AG04450 (cell line): ENCODE measurements at regions of chr12 and their contacts with region 1.

Region 1: DNA sequence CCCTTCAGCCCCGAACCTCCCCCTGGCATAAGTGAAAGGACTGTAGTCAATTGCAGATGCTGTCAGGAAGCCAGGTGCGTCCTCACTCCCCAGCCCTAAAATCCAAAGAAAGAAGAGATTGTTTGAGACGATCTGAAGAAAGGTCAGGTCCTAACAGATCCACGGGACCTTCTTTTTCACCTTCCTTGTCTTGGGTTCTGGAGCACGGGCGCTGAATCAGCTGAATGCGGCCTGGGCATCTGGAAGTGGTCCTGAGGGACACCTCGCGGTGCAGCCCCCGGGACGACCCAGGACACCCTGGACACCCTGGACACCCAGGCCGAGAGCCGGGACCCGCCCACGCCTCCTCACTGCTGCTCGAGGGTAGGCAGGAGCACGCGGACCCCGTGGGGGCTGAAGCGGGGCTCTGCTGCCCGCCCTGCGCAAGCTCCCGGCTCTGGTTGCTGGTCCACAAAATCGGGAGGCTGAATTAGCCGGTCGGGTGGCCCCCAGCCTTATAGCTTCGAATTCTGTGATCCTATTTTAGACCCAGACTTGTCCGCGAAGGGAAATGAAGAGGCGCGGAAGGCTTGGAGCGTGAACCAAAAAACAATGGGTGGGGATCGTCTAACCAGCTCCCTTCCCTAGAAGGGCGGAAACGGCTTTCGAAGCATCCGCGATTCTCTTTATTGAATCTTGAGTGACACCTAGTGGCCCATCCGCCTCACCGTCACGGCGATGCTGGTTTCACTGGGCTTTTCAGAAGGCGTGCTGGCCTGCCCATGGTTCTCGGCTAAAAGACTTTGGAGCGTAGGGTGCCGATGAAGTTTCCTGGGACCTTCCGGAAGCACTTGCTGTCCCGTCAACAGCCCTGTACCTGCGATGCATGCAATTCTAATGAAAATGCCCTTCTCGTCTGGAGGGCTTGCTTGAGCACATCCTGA is 46.4 kb upstream of the PLXNC1 start:
- DNase-seq: peak; percentile 73
- H3K4me3 ChIP-seq: peak overlapping the region; percentile 66
- H3K27ac ChIP-seq: peak overlapping the region; percentile 39
- H3K27me3 ChIP-seq: peaks cover 3% of the 10 kb centered on the region
- CTCF ChIP-seq: peak; percentile 80

Region 2: GRCh38 chr12:93502802-93503623 is 599.0 kb before region 1 on chr12:
- CTCF ChIA-PET with region 1: interaction called, 339 read pairs
- POLR2A ChIA-PET with region 1: interaction called, 8 read pairs
- DNase-seq: no peak
- H3K4me3 ChIP-seq: no peak overlapping the region
- H3K27ac ChIP-seq: no peak overlapping the region
- H3K27me3 ChIP-seq: no peaks in the 10 kb centered on the region
- CTCF ChIP-seq: peak; percentile 85

Region 3: DNA sequence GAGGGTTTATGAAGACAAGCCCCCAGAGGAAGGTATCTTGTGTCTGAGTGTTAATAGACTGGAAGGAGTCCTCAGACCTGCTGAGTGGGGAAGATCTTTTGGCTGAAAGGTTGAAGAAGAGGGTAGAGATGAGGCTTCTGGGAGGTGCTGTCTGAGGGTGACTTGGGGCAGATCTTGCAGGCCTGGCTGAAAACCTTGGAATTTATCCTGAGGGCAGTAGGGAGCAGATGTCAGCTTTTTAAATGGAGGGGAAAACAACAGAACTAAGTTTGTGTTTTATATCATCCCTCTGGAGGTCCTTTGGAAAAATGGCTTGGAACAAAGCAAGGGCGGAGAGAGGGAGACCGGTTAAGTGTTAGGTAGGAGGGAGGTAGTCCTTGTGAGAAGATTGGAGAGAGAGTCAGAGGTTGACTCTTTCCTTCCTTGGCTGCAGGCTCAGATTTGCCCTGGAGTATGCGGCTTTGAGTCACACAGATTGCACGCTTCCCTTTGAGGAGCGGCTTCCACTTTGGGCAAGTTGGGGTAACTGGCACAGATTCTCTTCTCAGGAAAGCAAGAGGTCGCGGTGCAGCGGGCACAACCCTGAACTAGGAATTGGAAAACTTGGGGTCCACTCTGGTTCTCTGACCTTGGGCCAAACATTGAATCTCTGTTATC is 519.8 kb before region 1 on chr12:
- CTCF ChIA-PET with region 1: interaction called, 10 read pairs
- POLR2A ChIA-PET with region 1: no interaction called
- DNase-seq: no peak
- H3K4me3 ChIP-seq: no peak overlapping the region
- H3K27ac ChIP-seq: no peak overlapping the region
- H3K27me3 ChIP-seq: no peaks in the 10 kb centered on the region
- CTCF ChIP-seq: no peak

Region 4: GRCh38 chr12:93766796-93767523 is 335.0 kb before region 1 on chr12:
- CTCF ChIA-PET with region 1: interaction called, 208 read pairs
- POLR2A ChIA-PET with region 1: no interaction called
- DNase-seq: no peak
- H3K4me3 ChIP-seq: no peak overlapping the region
- H3K27ac ChIP-seq: no peak overlapping the region
- H3K27me3 ChIP-seq: no peaks in the 10 kb centered on the region
- CTCF ChIP-seq: peak; percentile 72

Region 5: DNA sequence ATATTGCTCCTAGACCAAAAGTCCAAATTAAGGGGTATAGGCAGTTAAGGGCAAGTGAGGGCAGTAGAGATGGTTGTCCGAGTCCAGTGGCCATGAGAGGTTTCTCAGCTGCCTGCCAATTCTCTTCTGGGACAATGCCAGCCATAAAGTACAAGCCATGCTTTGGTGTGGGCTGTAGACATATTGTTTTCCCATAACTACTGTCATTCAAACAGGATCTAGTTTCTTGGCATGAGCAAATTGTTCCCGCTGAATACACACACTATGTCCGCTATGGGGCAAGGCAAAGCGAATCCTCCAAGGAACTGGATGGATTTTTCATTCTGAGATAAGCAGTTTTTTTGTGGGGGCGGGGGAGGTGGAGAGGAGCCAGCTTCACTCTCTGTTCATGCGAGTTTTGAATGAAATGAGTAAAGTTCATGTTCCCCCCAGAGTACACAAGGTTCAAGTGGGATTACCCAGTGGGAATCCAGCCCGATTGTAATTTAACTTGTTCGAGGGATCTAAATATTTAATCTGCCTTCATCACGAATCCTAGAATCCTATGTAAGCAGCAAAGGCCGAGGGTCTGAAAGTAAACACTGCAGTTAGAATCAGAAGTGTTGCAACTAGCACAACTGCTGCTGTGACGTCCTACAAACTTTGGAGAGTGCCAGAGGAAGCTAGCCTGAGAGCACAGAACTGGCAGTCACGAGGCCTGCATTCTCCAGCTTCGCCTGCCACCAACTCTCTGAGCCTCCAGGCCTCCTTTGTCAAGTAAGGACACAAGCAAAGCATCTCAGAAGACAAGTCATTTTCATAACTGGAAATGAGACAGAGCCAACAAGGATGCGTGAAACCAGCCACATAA is 287.8 kb before region 1 on chr12:
- CTCF ChIA-PET with region 1: interaction called, 11 read pairs
- POLR2A ChIA-PET with region 1: no interaction called
- DNase-seq: peak; percentile 61
- H3K4me3 ChIP-seq: no peak overlapping the region
- H3K27ac ChIP-seq: peak overlapping the region; percentile 83
- H3K27me3 ChIP-seq: no peaks in the 10 kb centered on the region
- CTCF ChIP-seq: no peak

Region 6: DNA sequence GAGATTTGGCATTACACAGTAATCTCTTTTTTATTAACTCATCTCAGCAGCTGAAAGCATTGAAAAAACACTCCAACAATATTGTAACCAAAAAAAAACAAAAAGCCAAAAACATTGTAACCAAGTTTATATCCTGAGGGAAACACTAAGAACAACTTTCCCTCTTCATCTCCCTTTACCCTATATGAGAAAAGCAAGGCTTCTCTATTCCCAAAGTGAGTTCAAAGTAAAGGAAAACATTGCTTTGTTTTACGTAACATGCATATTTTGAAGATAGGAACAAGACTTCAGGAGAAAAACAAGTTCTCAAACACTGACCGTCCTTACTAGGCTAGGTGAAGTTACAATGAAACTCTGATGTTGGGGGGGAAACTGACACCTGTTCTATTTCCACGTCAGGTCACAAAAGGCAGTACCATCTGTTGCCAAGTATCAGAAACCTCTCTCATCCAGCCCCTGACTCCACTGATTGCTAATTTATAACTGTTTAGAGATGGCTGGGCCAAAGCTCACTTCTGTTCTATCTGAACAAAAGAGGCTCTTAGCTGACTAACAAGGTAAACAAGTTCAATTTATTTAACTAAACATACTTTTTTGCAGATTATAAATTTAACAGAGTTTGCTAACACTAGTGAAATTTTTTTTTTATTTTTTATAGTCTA is 21.5 kb before region 1 on chr12:
- CTCF ChIA-PET with region 1: interaction called, 48 read pairs
- POLR2A ChIA-PET with region 1: no interaction called
- DNase-seq: no peak
- H3K4me3 ChIP-seq: no peak overlapping the region
- H3K27ac ChIP-seq: no peak overlapping the region
- H3K27me3 ChIP-seq: no peaks in the 10 kb centered on the region
- CTCF ChIP-seq: no peak

Region 7: DNA sequence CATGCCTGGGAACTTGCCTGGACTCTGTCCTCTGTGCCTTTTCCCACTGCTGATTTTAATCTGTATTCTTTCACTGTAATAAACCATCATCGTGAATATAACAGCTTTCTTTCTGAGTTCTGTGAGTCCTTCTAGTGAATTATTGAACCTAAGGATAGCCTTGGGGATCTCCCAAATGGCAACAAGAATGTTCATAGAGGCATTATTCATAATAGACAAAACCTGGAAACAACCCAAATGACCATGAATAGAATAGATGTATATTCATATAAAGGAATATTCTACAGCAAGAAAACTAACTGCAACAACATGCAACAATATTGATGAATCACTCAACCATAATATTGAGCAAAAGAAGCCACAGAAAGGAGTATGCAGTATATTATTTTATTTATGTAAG is 402.4 kb after region 1 on chr12:
- CTCF ChIA-PET with region 1: no interaction called
- POLR2A ChIA-PET with region 1: no interaction called
- DNase-seq: no peak
- H3K4me3 ChIP-seq: no peak overlapping the region
- H3K27ac ChIP-seq: no peak overlapping the region
- H3K27me3 ChIP-seq: peaks cover 2% of the 10 kb centered on the region
- CTCF ChIP-seq: no peak